Transverse colon (tissue), 4 donors: ENCODE measurements at regions of chr15 and their contacts with region 1.

Region 1: GRCh38 chr15:31391687-31392671 is 65.3 kb downstream of the KLF13 start:
- DNase-seq: peak; percentile 91
- H3K4me3 ChIP-seq: peak overlapping the region; percentile 45 to 67 (median 51)
- H3K27ac ChIP-seq: peak overlapping the region; percentile 84 to 89 (median 86)
- H3K4me1 ChIP-seq: peaks cover 3 to 31% (median 23%) of the 10 kb centered on the region in 4 donors
- H3K27me3 ChIP-seq: no peaks in the 10 kb centered on the region
- CTCF ChIP-seq: no peak
- EP300 ChIP-seq: peak; percentile 31
- POLR2A ChIP-seq: peak; percentile 90

Region 2: GRCh38 chr15:31062310-31062847 is 329.6 kb before region 1 on chr15:
- in situ Hi-C with region 1: no loop called
- intact Hi-C with region 1: no loop called
- DNase-seq: no peak
- H3K4me3 ChIP-seq: no peak overlapping the region
- H3K27ac ChIP-seq: no peak overlapping the region
- H3K4me1 ChIP-seq: no peaks in the 10 kb centered on the region
- H3K27me3 ChIP-seq: no peaks in the 10 kb centered on the region
- CTCF ChIP-seq: no peak
- EP300 ChIP-seq: no peak
- POLR2A ChIP-seq: no peak

Region 3: DNA sequence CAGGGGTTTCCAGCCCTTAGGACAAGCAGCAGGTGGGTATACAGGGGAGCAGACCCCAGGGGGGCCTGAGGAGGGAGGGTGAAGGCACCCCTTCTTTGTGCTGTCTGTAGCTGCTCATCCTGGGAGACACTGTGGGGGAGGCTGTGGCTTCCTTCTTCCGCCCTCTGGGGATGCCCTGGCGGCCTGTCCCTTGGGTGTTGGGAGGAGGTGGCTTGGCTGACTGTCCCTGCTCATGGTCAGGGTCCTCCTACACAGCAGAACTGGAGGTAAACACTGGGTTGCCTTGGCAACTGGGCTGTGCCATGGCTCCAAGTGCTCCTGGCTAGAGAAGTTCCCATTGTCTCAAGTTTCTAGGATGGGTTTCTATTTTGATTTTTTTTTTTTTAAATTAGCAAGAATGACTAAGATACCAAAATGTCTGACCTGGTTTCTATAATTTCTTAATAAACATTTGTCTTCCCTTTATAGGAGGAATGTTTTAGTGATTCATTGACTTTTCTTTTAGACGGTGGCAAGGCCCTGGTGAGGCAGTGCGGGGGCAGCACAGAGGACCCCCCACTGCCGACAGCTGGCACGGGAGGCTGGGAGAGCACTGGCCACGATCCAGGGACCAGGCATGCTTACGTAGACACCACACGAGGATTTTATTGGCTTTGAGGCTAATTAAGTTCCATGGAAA is 53.0 kb before region 1 on chr15:
- in situ Hi-C with region 1: no loop called
- intact Hi-C with region 1: loop called (anchors 10 kb)
- DNase-seq: no peak
- H3K4me3 ChIP-seq: no peak overlapping the region
- H3K27ac ChIP-seq: peak overlapping the region; percentile 72 to 76 (median 74)
- H3K4me1 ChIP-seq: peaks cover 58 to 100% (median 79%) of the 10 kb centered on the region in 4 donors
- H3K27me3 ChIP-seq: no peaks in the 10 kb centered on the region
- CTCF ChIP-seq: no peak
- EP300 ChIP-seq: no peak
- POLR2A ChIP-seq: no peak

Region 4: GRCh38 chr15:31349233-31350141 is 42.5 kb before region 1 on chr15:
- in situ Hi-C with region 1: no loop called
- intact Hi-C with region 1: no loop called
- DNase-seq: no peak
- H3K4me3 ChIP-seq: no peak overlapping the region
- H3K27ac ChIP-seq: peak overlapping the region in 3 of 4 donors; percentile 1 to 86 (median 28)
- H3K4me1 ChIP-seq: peaks cover 58 to 100% (median 75%) of the 10 kb centered on the region in 4 donors
- H3K27me3 ChIP-seq: no peaks in the 10 kb centered on the region
- CTCF ChIP-seq: no peak
- EP300 ChIP-seq: no peak
- POLR2A ChIP-seq: no peak

Region 5: DNA sequence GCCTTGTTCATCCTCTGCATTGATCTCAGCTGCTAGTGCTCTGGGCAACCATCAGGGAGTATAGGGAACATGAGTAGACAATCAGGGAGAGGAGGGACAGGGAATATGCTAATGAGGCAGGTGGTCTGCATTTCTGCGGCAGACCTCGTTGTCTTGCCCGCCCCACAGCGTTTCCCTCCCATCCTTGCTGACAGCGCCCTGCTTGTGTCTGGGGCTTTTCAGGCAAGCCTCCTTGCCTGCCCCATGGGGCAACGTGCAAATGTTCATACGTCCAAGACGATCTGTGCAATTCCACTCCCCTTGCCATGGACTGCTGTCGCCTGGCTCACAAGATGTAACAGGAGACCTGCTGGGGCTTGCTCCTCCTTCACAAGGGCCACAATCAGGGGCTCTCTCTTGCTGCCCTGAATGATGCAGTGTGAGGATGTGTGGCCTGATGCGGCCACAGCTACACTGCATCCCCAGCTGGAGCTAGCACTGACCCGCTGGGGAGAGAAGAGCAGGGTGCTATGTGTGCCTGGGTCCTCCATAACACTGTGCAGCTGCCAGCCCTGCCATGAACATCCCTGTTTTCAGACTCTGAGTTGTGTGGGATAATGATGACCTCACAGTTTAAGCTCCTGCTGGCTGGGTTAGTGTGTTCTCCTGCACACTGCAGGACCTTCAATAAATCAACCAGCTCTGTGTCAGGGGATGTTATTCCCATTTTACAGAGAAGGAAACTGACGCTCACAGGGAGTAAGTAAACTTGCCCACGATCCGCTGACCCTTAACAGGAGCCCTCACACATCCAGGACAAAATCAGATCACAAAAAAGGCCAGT is 146.0 kb after region 1 on chr15:
- in situ Hi-C with region 1: no loop called
- intact Hi-C with region 1: no loop called
- DNase-seq: no peak
- H3K4me3 ChIP-seq: no peak overlapping the region
- H3K27ac ChIP-seq: no peak overlapping the region
- H3K4me1 ChIP-seq: no peaks in the 10 kb centered on the region
- H3K27me3 ChIP-seq: no peaks in the 10 kb centered on the region
- CTCF ChIP-seq: no peak
- EP300 ChIP-seq: no peak
- POLR2A ChIP-seq: no peak